ENCODE measurements at regions of chr12 and their contacts with region 1.

Region 1: DNA sequence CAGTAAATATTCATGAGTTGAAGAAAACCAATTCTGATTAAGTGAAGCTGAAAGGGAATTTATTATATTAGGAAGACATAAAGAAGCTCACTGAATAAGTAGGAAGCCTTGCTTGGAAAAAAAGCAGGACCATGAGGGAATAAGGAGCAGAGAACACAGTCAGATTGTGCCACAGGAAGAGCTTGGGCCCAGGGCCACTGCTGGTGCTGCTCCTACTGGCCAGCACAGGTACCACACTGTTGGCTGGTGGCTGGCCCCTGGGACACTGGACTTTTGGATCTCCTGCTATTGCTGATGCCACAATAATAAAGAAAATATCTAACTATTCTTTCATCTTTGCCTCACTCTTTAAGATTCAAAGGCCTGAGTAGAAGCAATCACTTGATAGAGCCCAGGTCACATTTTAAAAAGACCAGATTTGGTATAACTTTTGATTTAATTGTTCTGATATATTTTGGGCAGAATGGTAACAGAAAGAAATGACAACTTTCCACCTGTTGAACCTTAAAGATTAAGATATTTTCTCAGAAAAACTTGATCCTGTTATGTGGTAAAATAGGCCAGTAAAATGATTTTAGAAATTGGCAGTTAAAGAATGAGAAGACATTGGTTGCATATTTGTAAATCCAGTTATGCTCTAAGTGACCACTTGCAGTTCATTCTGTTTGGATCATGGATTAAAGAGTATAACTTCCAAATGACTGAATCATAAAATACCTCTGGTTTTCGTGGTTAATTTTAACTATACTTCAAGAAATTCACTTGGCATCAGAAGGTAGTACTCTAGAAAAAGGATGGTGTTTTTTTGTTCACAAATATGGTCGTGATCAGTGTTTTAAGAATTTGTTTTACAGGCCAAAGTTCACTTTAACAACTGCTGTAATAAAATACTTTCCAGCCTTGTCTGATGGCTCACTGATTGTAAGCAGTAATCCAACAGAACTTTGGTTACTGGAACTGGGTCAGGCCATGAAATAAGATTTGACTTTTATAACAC is 68.3 kb downstream of the DERA start:
- DNase-seq: peak; percentile 24
- H3K4me3 ChIP-seq: no peak overlapping the region
- H3K27ac ChIP-seq: peak overlapping the region; percentile 99
- H3K4me1 ChIP-seq: peaks cover 45% of the 10 kb centered on the region
- H3K27me3 ChIP-seq: no peaks in the 10 kb centered on the region
- CTCF ChIP-seq: peak; percentile 69 to 72
- POLR2A ChIP-seq: no peak

Region 2: DNA sequence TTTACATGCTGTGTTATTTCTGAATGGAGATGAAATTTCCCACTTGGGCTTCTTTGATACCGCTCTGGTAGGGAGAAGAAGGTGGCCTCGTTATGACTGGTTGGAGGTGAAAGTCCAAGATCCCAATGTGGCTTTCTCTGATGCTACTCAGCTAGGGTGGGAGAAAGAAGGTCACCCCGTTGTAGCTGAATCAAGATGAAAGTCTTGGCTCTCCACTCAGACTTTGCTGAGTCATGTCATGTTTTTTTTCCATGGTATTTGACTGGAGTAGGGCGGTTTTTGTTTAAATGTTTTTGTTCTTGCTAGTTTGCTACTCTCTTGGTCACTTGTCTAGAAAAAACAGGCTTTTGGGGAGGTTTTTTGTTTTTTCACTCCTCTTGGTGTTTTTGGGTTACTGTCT is 1008.9 kb before region 1 on chr12:
- CTCF ChIA-PET with region 1: no interaction called
- POLR2A ChIA-PET with region 1: no interaction called
- dilution Hi-C with region 1: no loop called
- intact Hi-C with region 1: no loop called
- DNase-seq: no peak
- H3K4me3 ChIP-seq: no peak overlapping the region
- H3K27ac ChIP-seq: no peak overlapping the region
- H3K4me1 ChIP-seq: no peaks in the 10 kb centered on the region
- H3K27me3 ChIP-seq: no peaks in the 10 kb centered on the region
- CTCF ChIP-seq: no peak
- POLR2A ChIP-seq: no peak

Region 3: DNA sequence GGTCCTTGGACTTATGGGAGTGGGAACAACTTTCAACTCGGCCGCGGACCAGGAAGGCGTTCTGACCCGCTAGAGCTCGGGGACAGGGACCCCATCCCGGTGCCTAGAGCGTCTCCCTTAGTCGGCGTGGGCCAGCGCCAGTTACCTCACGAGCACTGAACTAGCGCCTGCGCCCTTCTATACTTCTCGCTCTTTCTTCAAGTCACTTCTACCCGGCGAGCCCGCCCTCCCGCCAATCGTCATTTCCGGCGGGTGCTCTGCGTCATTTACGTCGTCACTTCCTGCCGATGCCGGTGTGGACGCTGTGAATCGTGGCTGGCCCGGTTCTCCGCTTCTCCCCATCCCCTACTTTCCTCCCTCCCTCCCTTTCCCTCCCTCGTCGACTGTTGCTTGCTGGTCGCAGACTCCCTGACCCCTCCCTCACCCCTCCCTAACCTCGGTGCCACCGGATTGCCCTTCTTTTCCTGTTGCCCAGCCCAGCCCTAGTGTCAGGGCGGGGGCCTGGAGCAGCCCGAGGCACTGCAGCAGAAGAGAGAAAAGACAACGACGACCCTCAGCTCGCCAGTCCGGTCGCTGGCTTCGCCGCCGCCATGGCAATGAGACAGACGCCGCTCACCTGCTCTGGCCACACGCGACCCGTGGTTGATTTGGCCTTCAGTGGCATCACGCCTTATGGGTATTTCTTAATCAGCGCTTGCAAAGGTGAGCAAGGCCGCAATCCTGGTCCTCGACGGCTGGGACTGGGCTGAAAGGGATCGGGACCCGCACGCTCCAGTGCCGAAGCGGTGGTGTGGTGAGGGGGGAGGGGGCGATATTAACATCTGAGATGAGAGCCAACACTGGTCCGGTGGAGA is 97.0 kb before region 1 on chr12 and contains the start of gene STRAP:
- CTCF ChIA-PET with region 1: no interaction called
- POLR2A ChIA-PET with region 1: no interaction called
- dilution Hi-C with region 1: no loop called
- intact Hi-C with region 1: loop called (anchors 1 kb)
- DNase-seq: peak; percentile 99
- H3K4me3 ChIP-seq: peak within 1 kb of the TSS; percentile 59 to 100 (median 94)
- H3K27ac ChIP-seq: peak within 1 kb of the TSS; percentile 97
- H3K4me1 ChIP-seq: peaks cover 24% of the 10 kb centered on the region
- H3K27me3 ChIP-seq: no peaks in the 10 kb centered on the region
- CTCF ChIP-seq: no peak
- POLR2A ChIP-seq: peak; percentile 97
- total RNA-seq, gene STRAP: 138 and 144 TPM in 2 replicates

Region 4: DNA sequence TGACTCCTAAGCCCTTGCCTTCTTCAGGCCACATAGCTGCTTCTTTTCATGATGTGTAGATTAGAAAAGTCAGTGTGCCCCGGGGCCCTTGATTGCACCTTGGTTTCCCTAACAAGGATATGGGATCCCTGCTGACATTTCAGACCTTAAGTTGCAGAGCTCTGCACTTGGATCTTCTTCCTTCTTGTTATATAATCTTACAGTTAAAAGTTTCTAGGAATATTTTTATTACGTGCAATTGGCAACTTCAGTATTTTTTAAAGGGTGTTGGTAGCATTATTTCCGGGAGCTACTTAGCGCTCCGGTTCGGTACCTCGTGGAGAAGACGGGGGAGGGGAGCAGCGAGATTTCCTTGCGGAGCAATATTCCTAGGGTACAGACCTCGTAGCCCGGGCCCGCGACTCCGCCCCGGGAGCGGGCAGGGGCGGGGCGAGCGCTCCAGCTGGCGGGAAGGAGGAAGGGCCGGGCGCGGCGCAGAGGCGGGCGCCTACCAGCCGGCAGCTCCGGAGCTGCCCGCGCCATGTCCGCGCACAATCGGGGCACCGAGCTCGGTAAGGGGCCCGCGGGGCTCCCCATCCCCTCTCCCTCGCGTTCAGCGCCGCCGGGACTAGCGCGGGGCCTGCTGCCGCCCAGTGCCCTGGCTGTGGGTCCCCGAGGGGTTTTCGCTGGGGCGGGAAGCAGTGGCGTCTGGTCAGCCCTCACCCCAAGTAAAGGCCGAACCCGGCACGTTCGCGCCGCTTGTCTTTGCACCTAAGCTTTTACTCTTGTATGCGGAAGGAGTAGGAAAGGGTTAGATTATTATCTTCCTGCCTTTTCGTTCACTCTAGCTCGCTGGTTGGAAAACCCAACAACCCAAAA is 68.3 kb before region 1 on chr12 and contains the start of gene DERA:
- CTCF ChIA-PET with region 1: interaction called, 5 read pairs
- POLR2A ChIA-PET with region 1: interaction called, 4 read pairs
- dilution Hi-C with region 1: no loop called
- intact Hi-C with region 1: loop called (anchors 1 kb)
- DNase-seq: peak; percentile 85
- H3K4me3 ChIP-seq: peak within 1 kb of the TSS; percentile 80 to 96 (median 90)
- H3K27ac ChIP-seq: peak within 1 kb of the TSS; percentile 98
- H3K4me1 ChIP-seq: peaks cover 17% of the 10 kb centered on the region
- H3K27me3 ChIP-seq: no peaks in the 10 kb centered on the region
- CTCF ChIP-seq: no peak
- POLR2A ChIP-seq: peak; percentile 94
- total RNA-seq, gene DERA: 41.5 and 42.1 TPM in 2 replicates

Region 5: DNA sequence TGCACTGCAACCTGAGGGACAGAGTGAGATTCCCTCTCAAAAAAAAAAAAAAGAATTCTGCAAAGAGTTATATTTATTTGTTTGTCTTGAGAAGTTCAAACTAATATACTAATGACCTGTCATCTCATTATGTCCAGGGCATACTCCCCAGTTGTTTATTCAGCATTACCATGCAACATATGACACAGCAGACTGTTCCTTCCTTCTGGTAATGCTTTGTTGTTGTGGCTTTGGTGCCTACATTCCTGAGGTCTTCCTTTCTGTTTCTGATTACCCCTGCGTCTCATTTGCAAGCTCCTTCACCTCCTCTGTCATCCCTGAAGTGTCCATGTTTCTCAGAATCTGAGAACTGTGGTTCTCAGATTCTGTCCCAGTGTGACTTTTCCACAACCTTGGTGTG is 13.0 kb before region 1 on chr12:
- CTCF ChIA-PET with region 1: interaction called, 9 read pairs
- POLR2A ChIA-PET with region 1: no interaction called
- dilution Hi-C with region 1: no loop called
- intact Hi-C with region 1: loop called (anchors 1 kb)
- DNase-seq: peak; percentile 32
- H3K4me3 ChIP-seq: no peak overlapping the region
- H3K27ac ChIP-seq: peak overlapping the region; percentile 72
- H3K4me1 ChIP-seq: peaks cover 35% of the 10 kb centered on the region
- H3K27me3 ChIP-seq: no peaks in the 10 kb centered on the region
- CTCF ChIP-seq: no peak
- POLR2A ChIP-seq: no peak

Region 6: DNA sequence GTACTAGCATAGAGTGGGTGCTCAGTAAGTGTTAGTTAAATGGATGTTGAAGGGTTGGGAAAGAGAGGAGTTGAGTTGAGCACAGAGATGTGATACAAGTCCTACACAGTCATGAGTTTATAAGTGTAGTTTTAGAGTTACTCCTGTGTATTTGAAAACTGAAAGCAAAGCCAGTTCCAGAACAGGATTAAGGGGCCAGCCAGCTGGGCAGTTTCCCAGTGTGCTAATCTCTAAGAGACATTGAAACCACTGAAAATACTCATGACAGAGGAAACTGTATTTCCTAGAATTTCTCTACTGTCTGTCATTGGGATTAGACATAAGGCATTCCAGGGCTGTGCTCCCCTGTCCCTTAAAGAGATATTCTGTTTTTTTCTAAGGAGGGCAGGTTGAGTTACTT is 32.7 kb after region 1 on chr12:
- CTCF ChIA-PET with region 1: no interaction called
- POLR2A ChIA-PET with region 1: no interaction called
- dilution Hi-C with region 1: no loop called
- intact Hi-C with region 1: no loop called
- DNase-seq: peak; percentile 26
- H3K4me3 ChIP-seq: no peak overlapping the region
- H3K27ac ChIP-seq: no peak overlapping the region
- H3K4me1 ChIP-seq: no peaks in the 10 kb centered on the region
- H3K27me3 ChIP-seq: no peaks in the 10 kb centered on the region
- CTCF ChIP-seq: no peak
- POLR2A ChIP-seq: no peak

Region 7: DNA sequence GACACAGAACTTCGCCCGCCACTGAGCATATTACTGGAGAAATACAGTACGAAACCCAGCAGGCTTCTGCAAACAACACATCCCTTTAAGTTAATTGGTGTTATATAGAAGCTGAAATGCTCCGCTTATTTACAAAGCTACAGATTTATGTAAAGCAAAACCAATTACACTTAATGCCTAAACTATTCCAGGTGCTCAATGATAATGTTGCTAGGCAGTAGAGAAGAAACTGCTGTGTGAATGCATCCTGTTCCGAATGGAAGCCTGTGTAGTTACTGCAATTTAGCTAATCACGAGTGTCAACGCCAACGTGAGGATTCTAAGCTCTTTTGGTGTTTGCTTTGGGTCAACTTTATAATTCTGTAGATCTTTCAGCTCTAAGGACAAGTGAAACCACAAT is 208.3 kb after region 1 on chr12:
- CTCF ChIA-PET with region 1: no interaction called
- POLR2A ChIA-PET with region 1: no interaction called
- dilution Hi-C with region 1: no loop called
- intact Hi-C with region 1: no loop called
- DNase-seq: no peak
- H3K4me3 ChIP-seq: no peak overlapping the region
- H3K27ac ChIP-seq: no peak overlapping the region
- H3K4me1 ChIP-seq: no peaks in the 10 kb centered on the region
- H3K27me3 ChIP-seq: no peaks in the 10 kb centered on the region
- CTCF ChIP-seq: no peak
- POLR2A ChIP-seq: no peak

Region 8: DNA sequence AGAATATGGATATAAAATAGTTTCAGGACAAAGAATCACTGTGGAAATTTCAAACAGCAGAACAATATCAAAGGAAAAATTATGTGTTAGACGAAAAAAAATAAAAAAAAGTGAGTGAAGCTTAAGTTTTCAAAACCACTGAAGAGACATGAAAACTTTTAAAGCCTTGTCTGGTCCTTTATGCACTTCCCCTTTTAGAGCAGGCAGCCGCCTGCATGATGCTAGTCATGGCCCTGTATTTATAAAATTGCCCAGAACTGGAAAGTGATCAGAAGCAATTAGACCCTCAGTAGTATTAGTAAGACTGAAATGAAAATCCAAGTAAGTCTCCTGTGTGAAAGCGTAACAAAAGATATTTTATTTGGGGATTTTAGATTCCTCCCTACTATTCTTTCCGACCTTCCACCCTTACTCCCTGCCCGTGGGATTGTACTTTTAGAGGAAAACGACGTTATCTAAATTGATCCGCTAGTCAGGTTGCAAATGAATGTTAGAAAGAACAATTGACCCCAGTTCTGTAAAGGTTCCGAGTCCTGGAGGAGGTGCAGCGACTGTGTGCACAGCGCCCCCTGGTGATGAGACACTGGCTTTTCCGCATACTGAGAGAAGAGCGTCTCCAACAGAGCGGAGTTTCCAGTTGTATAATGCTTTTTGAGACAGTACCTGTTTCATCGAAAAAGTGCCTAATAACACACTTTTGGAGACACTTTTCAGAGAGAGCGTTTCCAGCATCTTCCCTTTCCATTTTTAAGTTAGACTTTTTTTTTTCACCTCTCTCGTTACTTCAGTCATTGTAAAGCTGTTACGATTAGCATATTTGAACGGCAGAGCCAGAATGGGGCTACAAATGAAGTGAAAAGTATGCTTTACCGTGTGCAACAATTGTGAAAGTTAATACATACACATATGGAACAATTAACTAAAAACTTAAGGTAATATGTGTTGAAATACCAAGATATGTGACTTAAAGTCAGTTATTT is 380.4 kb after region 1 on chr12:
- CTCF ChIA-PET with region 1: interaction called, 8 read pairs
- POLR2A ChIA-PET with region 1: no interaction called
- dilution Hi-C with region 1: no loop called
- intact Hi-C with region 1: loop called (anchors 1 kb)
- DNase-seq: peak; percentile 27
- H3K4me3 ChIP-seq: no peak overlapping the region
- H3K27ac ChIP-seq: no peak overlapping the region
- H3K4me1 ChIP-seq: no peaks in the 10 kb centered on the region
- H3K27me3 ChIP-seq: no peaks in the 10 kb centered on the region
- CTCF ChIP-seq: peak; percentile 70 to 83
- POLR2A ChIP-seq: no peak